Mammary epithelial cell (primary cell): ENCODE measurements at regions of chr18 and their contacts with region 1.

Region 1: DNA sequence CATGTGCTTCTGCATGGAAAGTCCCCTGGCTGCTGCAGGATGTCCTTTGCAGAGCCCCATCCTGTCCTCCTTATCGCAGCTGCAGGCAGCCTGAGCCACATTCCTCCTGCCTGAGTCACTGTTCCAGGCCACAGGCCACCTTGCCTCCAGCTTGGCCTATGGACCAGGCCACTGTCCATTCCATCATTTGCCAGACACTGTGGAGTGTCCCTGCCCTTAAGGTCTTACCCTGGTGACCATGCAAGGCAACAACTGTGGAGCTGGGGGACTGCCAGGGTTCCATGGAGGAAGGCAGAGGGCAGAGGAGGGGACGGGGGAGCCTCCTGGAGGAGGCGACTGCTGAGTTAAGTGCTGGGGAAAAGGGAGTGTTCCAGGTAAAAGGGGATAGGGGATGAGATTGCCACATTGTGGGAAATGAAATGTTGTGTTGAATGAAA is 38.7 kb downstream of the INO80C start:
- DNase-seq: peak; percentile 84
- H3K4me3 ChIP-seq: no peak overlapping the region
- H3K27ac ChIP-seq: no peak overlapping the region
- H3K4me1 ChIP-seq: peaks cover 67% of the 10 kb centered on the region
- H3K27me3 ChIP-seq: no peaks in the 10 kb centered on the region
- CTCF ChIP-seq: no peak

Region 2: GRCh38 chr18:35386600-35387351 is 72.2 kb before region 1 on chr18:
- CTCF ChIA-PET with region 1: no interaction called
- dilution Hi-C with region 1: no loop called
- in situ Hi-C with region 1: no loop called
- intact Hi-C with region 1: no loop called
- DNase-seq: peak; percentile 61
- H3K4me3 ChIP-seq: no peak overlapping the region
- H3K27ac ChIP-seq: no peak overlapping the region
- H3K4me1 ChIP-seq: no peaks in the 10 kb centered on the region
- H3K27me3 ChIP-seq: no peaks in the 10 kb centered on the region
- CTCF ChIP-seq: peak; percentile 92 to 96

Region 3: DNA sequence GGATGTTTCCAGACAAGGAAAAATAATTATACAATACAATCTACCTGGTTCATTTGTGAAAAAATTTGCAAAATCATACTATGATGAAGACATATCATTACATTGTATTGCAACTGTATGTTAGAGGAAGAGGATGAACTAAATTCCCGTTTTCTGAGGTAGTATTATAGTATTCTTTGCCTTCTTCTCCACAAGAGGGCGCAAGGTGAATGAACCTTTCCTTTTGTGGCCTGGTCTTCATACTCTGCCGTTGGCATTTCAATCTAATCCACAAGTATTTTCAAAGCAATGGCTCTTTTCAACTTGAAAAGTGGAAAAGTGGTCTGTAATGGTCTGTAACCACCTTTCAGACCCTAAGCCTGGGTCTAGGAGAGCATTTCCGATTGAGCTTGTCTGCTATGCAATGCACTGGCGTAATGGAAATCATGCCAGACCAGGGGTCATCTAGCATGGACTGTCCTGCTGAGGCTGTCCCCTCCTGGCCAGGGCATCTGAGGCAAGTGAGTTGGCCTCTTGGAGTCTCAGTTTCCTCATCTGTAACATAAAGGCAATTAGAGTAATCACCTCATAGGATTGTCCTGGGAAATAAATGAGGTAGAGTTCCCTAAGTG is 51.0 kb before region 1 on chr18:
- CTCF ChIA-PET with region 1: no interaction called
- dilution Hi-C with region 1: no loop called
- in situ Hi-C with region 1: no loop called
- intact Hi-C with region 1: loop called (anchors 2 kb)
- DNase-seq: peak; percentile 66
- H3K4me3 ChIP-seq: no peak overlapping the region
- H3K27ac ChIP-seq: no peak overlapping the region
- H3K4me1 ChIP-seq: peaks cover 40% of the 10 kb centered on the region
- H3K27me3 ChIP-seq: no peaks in the 10 kb centered on the region
- CTCF ChIP-seq: peak; percentile 69 to 81

Region 4: GRCh38 chr18:35441857-35442595 is 17.0 kb before region 1 on chr18:
- CTCF ChIA-PET with region 1: no interaction called
- dilution Hi-C with region 1: no loop called
- in situ Hi-C with region 1: no loop called
- intact Hi-C with region 1: loop called (anchors 2 kb)
- DNase-seq: peak; percentile 93
- H3K4me3 ChIP-seq: no peak overlapping the region
- H3K27ac ChIP-seq: peak overlapping the region; percentile 86
- H3K4me1 ChIP-seq: peaks cover 27% of the 10 kb centered on the region
- H3K27me3 ChIP-seq: no peaks in the 10 kb centered on the region
- CTCF ChIP-seq: no peak

Region 5: GRCh38 chr18:35478520-35479435 is 19.8 kb after region 1 on chr18:
- CTCF ChIA-PET with region 1: no interaction called
- dilution Hi-C with region 1: no loop called
- in situ Hi-C with region 1: no loop called
- intact Hi-C with region 1: loop called (anchors 1 kb)
- DNase-seq: peak; percentile 100
- H3K4me3 ChIP-seq: peak overlapping the region; percentile 46 to 65 (median 63)
- H3K27ac ChIP-seq: peak overlapping the region; percentile 100
- H3K4me1 ChIP-seq: peaks cover 37% of the 10 kb centered on the region
- H3K27me3 ChIP-seq: no peaks in the 10 kb centered on the region
- CTCF ChIP-seq: peak in 1 of 2 donors; percentile 5

Region 6: DNA sequence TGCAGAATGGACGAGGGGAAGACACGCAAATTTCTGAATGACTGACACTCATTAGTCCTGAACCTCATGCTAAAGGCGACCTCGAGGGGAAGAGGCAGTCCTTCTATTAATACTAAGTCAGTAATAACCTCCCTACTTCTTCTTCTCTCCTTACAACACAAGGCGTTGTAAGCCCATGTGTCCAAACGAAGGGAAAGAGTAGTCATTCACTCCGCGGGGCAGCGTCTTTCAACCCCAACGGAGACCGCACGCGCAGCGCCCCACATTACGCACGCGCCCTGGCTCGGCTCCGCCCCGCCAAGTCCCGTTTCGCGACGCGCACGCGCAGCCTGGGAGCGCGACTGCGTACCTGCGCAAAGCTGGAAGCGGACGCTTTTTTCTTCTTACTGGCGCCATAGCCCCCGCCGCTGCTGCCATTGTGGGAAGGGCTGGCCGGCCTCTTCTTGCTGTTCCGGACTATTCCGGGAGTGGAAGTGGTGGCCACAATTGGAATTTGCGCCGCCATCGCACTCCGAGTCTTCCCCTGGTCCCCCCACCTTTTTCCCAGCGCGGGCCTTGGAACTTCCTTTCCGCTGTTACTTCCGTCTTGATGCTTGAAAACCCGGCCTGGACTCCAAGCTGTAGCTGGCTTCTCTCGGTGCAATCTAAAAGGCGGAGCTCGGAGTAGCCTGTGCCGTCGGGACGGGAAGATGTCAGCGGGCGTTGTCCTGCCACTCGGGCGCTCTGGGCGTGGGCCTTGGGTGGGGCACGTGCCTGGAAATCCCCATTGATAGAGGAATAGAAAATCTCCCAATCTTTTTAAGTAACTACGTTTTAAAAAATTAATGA is 38.6 kb after region 1 on chr18 and contains the start of gene INO80C:
- CTCF ChIA-PET with region 1: no interaction called
- dilution Hi-C with region 1: no loop called
- in situ Hi-C with region 1: no loop called
- intact Hi-C with region 1: loop called (anchors 1 kb)
- DNase-seq: peak; percentile 94
- H3K4me3 ChIP-seq: peak within 1 kb of the TSS; percentile 59 to 84 (median 70)
- H3K27ac ChIP-seq: peak within 1 kb of the TSS; percentile 87
- H3K4me1 ChIP-seq: peaks cover 31% of the 10 kb centered on the region
- H3K27me3 ChIP-seq: no peaks in the 10 kb centered on the region
- CTCF ChIP-seq: no peak
- total RNA-seq, gene INO80C: 7.2 to 46.5 TPM

Region 7: DNA sequence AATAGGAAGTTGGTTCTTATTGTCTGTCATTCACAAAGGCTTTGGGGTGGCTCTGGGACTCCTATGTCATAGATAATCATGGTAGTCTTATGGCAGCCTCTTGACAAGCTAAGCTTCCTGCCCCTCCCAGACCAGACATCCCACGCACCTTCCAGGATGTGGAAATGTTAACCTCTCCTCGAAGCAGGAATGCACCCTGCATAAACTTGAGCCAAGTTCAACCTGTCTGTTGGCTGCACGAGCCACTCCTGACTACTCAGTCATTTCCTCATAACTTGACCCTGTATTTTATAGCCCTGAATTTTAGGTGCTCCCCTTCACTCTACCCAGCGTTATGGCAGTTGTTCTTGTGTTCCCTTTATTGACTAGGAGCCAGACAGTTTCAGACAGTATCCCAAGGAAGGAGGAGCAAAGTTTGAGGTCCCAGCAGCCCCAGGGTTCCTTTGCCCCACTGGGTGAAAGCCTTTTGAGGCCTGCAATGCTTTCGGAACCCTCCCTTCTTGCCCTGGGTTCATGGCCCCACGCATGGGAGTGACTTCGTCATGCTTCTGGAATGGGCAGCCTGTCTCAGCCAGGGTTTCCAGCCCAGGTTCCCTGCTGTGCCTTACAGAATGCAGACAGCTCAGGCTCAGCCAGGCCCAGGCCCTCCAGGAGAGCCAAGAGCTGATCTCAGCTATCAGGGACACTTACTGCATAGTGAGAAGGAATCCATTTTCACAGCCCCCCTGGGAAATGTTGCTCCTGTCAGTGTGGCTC is 54.3 kb after region 1 on chr18:
- CTCF ChIA-PET with region 1: no interaction called
- dilution Hi-C with region 1: loop called (anchors 5 kb)
- in situ Hi-C with region 1: no loop called
- intact Hi-C with region 1: no loop called
- DNase-seq: peak; percentile 61
- H3K4me3 ChIP-seq: no peak overlapping the region
- H3K27ac ChIP-seq: peak overlapping the region; percentile 9
- H3K4me1 ChIP-seq: peaks cover 38% of the 10 kb centered on the region
- H3K27me3 ChIP-seq: no peaks in the 10 kb centered on the region
- CTCF ChIP-seq: no peak

Region 8: GRCh38 chr18:35580701-35581539 is 121.9 kb after region 1 on chr18:
- CTCF ChIA-PET with region 1: no interaction called
- dilution Hi-C with region 1: no loop called
- in situ Hi-C with region 1: no loop called
- intact Hi-C with region 1: loop called (anchors 5 kb)
- DNase-seq: peak; percentile 58
- H3K4me3 ChIP-seq: peak overlapping the region; percentile 65 to 77 (median 69)
- H3K27ac ChIP-seq: peak overlapping the region; percentile 55
- H3K4me1 ChIP-seq: peaks cover 9% of the 10 kb centered on the region
- H3K27me3 ChIP-seq: no peaks in the 10 kb centered on the region
- CTCF ChIP-seq: no peak